A549 (cell line): ENCODE measurements at regions of chr7 and their contacts with region 1.

Region 1: GRCh38 chr7:108253275-108254044 is 123.3 kb upstream of the LAMB4 start:
- DNase-seq: peak in 1 of 2 experiments; percentile 35
- ATAC-seq: peak; percentile 37 to 60; a peak in 4 of 6 replicates
- H3K4me3 ChIP-seq: no peak overlapping the region
- H3K27ac ChIP-seq: peak overlapping the region; percentile 86 to 97
- H3K4me1 ChIP-seq: peaks cover 84% of the 10 kb centered on the region
- CTCF ChIP-seq: no peak
- EP300 ChIP-seq: no peak
- POLR2A ChIP-seq: no peak
- RAD21 ChIP-seq: no peak

Region 2: DNA sequence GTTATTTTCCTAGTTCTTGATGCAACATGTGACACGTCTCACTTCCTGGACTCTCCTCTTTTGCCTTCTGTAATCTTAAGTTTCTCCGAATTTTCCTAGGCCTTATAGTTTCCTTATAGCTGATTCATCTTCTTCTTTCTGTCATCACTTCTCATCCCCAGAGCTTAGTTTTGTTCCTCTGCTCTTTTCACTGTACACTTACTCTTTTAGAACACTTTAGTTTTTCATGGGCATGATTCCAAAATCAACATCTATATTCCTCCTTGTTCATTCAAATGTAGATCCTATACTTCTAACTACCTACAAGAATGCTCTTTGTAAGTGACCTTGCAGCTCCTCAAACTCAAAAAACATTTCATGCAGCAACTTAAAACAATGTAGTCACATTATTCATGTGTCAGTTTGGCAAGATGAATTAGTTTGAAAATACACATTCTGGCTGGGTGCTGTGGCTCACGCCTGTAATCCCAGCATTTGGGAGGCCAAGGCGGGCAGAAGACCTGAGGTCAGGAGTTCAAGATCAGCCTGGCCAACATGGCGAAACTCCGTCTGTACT is 437.4 kb before region 1 on chr7:
- CTCF ChIA-PET with region 1: no interaction called
- POLR2A ChIA-PET with region 1: no interaction called
- DNase-seq: no peak
- ATAC-seq: no peak
- H3K4me3 ChIP-seq: no peak overlapping the region
- H3K27ac ChIP-seq: no peak overlapping the region
- H3K4me1 ChIP-seq: no peaks in the 10 kb centered on the region
- CTCF ChIP-seq: no peak
- EP300 ChIP-seq: no peak
- POLR2A ChIP-seq: no peak
- RAD21 ChIP-seq: no peak

Region 3: GRCh38 chr7:108211382-108212201 is 41.9 kb before region 1 on chr7:
- CTCF ChIA-PET with region 1: no interaction called
- POLR2A ChIA-PET with region 1: no interaction called
- DNase-seq: peak; percentile 55 to 96
- ATAC-seq: peak; percentile 95 to 99
- H3K4me3 ChIP-seq: 0 out of 3 replicates have a peak overlapping the region, but pooled peaks have one; percentile 6
- H3K27ac ChIP-seq: peak overlapping the region; percentile 86 to 95
- H3K4me1 ChIP-seq: peaks cover 44% of the 10 kb centered on the region
- CTCF ChIP-seq: no peak
- EP300 ChIP-seq: peak; percentile 48 to 86; a peak in 3 of 5 replicates
- POLR2A ChIP-seq: no peak
- RAD21 ChIP-seq: peak in 1 of 2 experiments; percentile 42; a peak in 2 of 5 replicates

Region 4: DNA sequence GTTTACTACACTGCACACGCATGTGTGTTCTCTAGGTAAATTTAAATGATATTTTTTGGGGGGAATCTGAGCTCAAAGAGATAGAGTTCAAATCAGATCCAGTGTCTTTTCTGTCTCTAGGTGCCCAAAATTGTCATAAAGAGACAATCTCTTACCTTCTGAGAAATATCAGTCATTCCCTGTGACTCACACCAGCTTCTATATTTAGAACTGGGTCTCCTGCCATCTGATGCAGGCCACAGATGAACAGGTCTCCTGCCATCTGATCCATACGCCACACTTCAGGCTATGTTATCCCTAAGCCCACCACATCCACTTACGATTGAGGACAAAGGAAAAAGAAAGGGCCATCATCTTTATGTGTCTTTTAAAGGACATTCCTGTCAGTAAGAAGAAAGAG is 13.0 kb after region 1 on chr7:
- CTCF ChIA-PET with region 1: interaction called, 11 read pairs
- POLR2A ChIA-PET with region 1: no interaction called
- DNase-seq: no peak
- ATAC-seq: peak in 1 of 2 experiments; percentile 43; a peak in 2 of 6 replicates
- H3K4me3 ChIP-seq: no peak overlapping the region
- H3K27ac ChIP-seq: peak overlapping the region; percentile 11 to 34; a peak in 5 of 6 replicates
- H3K4me1 ChIP-seq: peaks cover 48% of the 10 kb centered on the region
- CTCF ChIP-seq: no peak
- EP300 ChIP-seq: no peak
- POLR2A ChIP-seq: no peak
- RAD21 ChIP-seq: no peak